ENCODE measurements at regions of chr17 and their contacts with region 1.

Region 1: GRCh38 chr17:36611345-36612072 is 10.1 kb downstream of the MRM1 start:
- DNase-seq: no peak
- ATAC-seq: peak in 1 of 4 donors; percentile 33
- H3K4me3 ChIP-seq: no peak overlapping the region
- H3K27ac ChIP-seq: no peak overlapping the region
- H3K4me1 ChIP-seq: peaks cover 4% of the 10 kb centered on the region
- H3K27me3 ChIP-seq: no peaks in the 10 kb centered on the region
- CTCF ChIP-seq: no peak

Region 2: GRCh38 chr17:36705874-36706731 is 94.6 kb after region 1 on chr17:
- intact Hi-C with region 1: loop called in 1 of 2 experiments (anchors 5 kb)
- DNase-seq: peak in 1 of 2 donors; percentile 30
- ATAC-seq: peak; percentile 46 to 67 (median 59)
- H3K4me3 ChIP-seq: no peak overlapping the region
- H3K27ac ChIP-seq: no peak overlapping the region
- H3K4me1 ChIP-seq: no peaks in the 10 kb centered on the region
- H3K27me3 ChIP-seq: peaks cover 0 to 42% (median 2%) of the 10 kb centered on the region in 3 donors
- CTCF ChIP-seq: peak; percentile 53

Measured in psoas muscle (tissue), 8 donors.